PC-9 (cell line): ENCODE measurements at regions of chr3 and their contacts with region 1.

Region 1: GRCh38 chr3:181604267-181604666 is 107.5 kb upstream of the SOX2 start:
- DNase-seq: no peak
- H3K4me3 ChIP-seq: no peak overlapping the region
- H3K27ac ChIP-seq: no peak overlapping the region
- H3K4me1 ChIP-seq: no peaks in the 10 kb centered on the region
- H3K27me3 ChIP-seq: no peaks in the 10 kb centered on the region
- CTCF ChIP-seq: no peak

Region 2: GRCh38 chr3:181581656-181582055 is 22.6 kb before region 1 on chr3:
- CTCF ChIA-PET with region 1: no interaction called
- POLR2A ChIA-PET with region 1: interaction called, 13 read pairs
- intact Hi-C with region 1: no loop called
- DNase-seq: no peak
- H3K4me3 ChIP-seq: no peak overlapping the region
- H3K27ac ChIP-seq: no peak overlapping the region
- H3K4me1 ChIP-seq: no peaks in the 10 kb centered on the region
- H3K27me3 ChIP-seq: no peaks in the 10 kb centered on the region
- CTCF ChIP-seq: no peak

Region 3: DNA sequence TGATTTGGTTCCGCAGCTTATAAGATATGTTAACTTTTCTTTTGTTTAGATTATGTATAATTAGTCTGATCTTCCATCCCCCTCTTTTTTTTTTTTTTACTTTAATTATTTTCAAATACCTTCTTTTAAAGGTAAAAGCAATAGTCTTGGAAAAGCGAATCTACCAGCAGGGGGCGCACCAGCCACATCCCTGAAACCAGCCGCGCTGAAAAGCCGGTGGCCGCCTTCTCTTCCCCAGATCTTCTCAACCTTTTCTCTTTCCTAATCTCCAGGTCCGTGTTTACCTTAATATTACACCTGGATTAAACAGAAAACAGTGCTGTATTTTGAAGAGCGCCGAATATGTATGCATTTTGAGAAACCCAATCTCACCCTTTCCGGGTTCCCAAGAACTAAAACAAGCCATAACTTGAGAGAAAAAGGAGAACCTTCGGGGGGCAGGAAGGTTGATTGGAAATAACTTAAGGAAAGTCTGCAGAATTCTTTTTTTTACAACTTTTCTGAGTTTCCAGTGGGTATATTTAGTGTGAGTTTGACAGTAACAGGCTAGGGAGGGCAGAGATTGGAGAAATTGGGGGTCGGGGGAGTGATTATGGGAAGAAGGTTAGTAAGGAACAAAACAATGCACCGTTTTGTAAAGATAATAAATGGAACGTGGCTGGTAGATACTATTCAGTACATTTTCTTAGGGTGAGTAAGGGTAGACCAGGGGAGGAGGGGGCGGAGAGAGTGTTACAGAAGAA is 105.4 kb after region 1 on chr3:
- CTCF ChIA-PET with region 1: no interaction called
- POLR2A ChIA-PET with region 1: no interaction called
- intact Hi-C with region 1: no loop called
- DNase-seq: peak; percentile 48 to 86
- H3K4me3 ChIP-seq: peak overlapping the region; percentile 51
- H3K27ac ChIP-seq: no peak overlapping the region
- H3K4me1 ChIP-seq: peaks cover 20% of the 10 kb centered on the region
- H3K27me3 ChIP-seq: peaks cover 22% of the 10 kb centered on the region
- CTCF ChIP-seq: peak; percentile 97

Region 4: GRCh38 chr3:181886676-181887075 is 282.4 kb after region 1 on chr3:
- CTCF ChIA-PET with region 1: no interaction called
- POLR2A ChIA-PET with region 1: no interaction called
- intact Hi-C with region 1: no loop called
- DNase-seq: no peak
- H3K4me3 ChIP-seq: no peak overlapping the region
- H3K27ac ChIP-seq: no peak overlapping the region
- H3K4me1 ChIP-seq: no peaks in the 10 kb centered on the region
- H3K27me3 ChIP-seq: no peaks in the 10 kb centered on the region
- CTCF ChIP-seq: no peak